ENCODE measurements at regions of chr16 and their contacts with region 1.

Region 1: DNA sequence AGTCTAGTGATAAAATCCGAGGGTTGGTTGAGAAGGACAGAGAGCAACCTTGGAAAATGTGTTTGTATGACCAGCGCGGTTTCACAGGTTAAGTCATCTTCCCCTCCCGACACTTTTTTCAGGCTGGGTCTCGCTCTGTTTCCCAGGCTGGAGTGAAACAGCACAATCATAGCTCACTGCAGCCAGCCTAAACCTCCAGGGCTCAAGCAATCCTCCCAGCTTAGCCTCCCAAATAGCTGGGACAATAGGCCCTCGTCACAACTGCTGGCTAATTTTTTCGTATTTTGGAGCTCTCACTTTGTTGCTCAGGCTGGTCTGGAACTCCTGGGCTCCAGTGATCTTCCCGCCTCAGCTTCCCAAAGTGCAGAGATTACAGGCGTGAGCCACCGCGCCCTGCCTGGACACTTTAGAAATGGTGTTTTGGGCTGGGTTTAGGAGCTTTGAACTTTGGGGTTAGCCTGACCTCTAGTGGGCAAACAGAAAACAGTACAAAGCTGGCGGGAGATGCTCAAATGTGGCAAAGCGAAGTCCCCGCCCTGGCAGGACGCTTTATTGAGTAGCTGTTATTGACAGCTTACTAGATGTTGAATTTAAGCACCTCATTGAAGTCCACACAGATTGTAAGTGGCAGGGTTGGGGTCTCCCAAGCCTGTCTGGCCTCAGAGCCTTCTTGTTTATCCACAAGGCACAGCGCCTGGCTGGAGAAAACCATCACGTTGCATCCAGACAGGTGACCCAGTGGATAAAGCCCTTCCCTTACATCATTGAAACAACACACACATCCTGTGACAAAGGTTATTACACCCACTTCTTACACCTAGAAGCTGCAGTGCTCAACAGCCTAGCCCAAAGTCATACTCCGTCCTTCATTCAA is 34.7 kb upstream of the RBBP6 start:
- DNase-seq: peak; percentile 66
- ATAC-seq: peak; percentile 88
- H3K4me3 Mint-ChIP-seq: no peak overlapping the region
- H3K27ac Mint-ChIP-seq: no peak overlapping the region
- H3K4me1 Mint-ChIP-seq: no peaks in the 10 kb centered on the region
- H3K27me3 Mint-ChIP-seq: peaks cover 10% of the 10 kb centered on the region
- CTCF ChIP-seq: peak; percentile 76

Region 2: DNA sequence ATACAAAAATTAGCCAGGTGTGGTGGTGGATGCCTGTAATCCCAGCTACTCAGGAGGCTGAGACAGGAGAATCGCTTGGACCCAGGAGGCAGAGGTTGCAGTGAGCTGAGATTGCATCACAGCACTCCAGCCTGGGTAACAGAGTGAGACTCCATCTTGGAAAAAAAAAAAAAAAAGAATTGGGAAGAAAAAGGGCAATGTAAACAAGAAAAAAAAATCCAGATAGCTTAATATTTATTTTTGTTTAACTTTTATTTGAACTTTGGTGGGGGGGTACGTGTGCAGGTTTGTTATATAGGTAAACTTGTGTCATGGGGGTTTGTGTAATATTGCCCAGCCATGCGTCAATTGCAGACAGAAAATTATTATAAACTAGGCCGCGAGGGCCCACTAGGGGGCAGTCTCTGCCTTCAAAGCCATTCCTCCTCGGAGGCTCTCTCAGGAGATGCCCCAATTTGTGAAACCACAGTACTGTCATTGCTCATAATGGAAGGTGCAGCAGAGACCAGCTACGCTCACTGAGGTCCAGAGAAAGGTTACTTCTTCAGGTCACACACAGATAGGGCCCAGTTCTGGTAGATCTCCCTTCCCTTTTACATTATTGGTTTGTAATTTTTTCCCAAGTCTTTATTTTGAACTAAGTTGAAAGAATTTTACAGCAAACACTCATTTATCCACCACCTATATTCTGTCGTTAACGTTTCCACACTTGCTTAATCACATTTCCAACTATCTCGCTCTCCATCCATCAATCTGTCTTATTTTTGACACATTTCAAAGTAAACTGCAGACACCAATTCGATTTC is 462.7 kb before region 1 on chr16:
- CTCF ChIA-PET with region 1: interaction called, 36 read pairs
- POLR2A ChIA-PET with region 1: no interaction called
- intact Hi-C with region 1: loop called (anchors 10 kb)
- DNase-seq: peak; percentile 92
- ATAC-seq: peak; percentile 97
- H3K4me3 Mint-ChIP-seq: no peak overlapping the region
- H3K27ac Mint-ChIP-seq: no peak overlapping the region
- H3K4me1 Mint-ChIP-seq: peaks cover 4% of the 10 kb centered on the region
- H3K27me3 Mint-ChIP-seq: no peaks in the 10 kb centered on the region
- CTCF ChIP-seq: peak; percentile 86

Region 3: GRCh38 chr16:24382762-24383407 is 121.8 kb before region 1 on chr16:
- CTCF ChIA-PET with region 1: no interaction called
- POLR2A ChIA-PET with region 1: no interaction called
- intact Hi-C with region 1: no loop called
- DNase-seq: no peak
- ATAC-seq: no peak
- H3K4me3 Mint-ChIP-seq: no peak overlapping the region
- H3K27ac Mint-ChIP-seq: no peak overlapping the region
- H3K4me1 Mint-ChIP-seq: no peaks in the 10 kb centered on the region
- H3K27me3 Mint-ChIP-seq: peaks cover 7% of the 10 kb centered on the region
- CTCF ChIP-seq: no peak

Region 4: DNA sequence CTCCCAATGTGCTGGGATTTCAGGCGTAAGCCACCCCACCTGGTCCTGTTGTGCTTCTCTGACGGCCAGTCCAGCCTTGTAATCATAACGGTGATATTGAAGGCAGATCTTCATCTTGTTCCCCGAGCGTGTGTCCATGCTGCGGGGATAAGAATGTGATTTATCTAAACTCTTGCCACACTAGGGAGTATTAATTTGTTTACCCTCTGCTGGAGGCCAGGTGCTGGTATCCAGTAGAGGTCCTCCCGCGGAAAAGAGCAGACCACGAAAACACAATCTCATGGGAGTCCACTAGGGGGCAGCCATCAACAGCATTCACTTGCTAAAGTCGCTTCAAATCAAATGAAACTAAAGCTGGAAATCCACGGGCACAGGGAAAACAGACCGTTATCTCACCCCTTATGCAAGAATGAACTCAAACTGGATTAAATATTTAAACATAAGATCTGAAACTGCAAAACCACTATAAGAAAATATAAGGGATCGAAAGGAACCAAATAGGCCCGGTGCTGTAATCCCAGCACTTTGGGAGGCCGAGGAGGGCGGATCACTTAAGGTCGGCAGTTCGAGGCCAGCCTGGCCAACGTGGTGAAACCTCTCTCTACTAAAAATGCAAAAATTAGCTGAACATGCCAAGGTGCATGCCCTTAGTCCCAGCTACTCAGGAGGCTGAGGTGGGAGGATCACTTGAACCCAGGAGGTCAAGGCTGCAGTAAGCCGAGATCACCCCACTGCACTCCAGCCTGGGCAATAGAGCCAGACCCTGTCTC is 12.4 kb after region 1 on chr16:
- CTCF ChIA-PET with region 1: interaction called, 25 read pairs
- POLR2A ChIA-PET with region 1: no interaction called
- intact Hi-C with region 1: no loop called
- DNase-seq: peak; percentile 87
- ATAC-seq: peak; percentile 79
- H3K4me3 Mint-ChIP-seq: peak overlapping the region; percentile 38
- H3K27ac Mint-ChIP-seq: no peak overlapping the region
- H3K4me1 Mint-ChIP-seq: peaks cover 7% of the 10 kb centered on the region
- H3K27me3 Mint-ChIP-seq: peaks cover 2% of the 10 kb centered on the region
- CTCF ChIP-seq: peak; percentile 96